ENCODE measurements at regions of chr13 and their contacts with region 1.

Region 1: GRCh38 chr13:27977476-27978300 is 8.6 kb upstream of the CDX2 start:
- DNase-seq: peak in 1 of 2 experiments; percentile 43
- H3K4me3 ChIP-seq: peak overlapping the region; percentile 85
- H3K4me3 Mint-ChIP-seq: peak overlapping the region; percentile 82
- H3K27ac Mint-ChIP-seq: peak overlapping the region; percentile 10
- H3K4me1 ChIP-seq: peaks cover 43% of the 10 kb centered on the region
- H3K4me1 Mint-ChIP-seq: peaks cover 32% of the 10 kb centered on the region
- H3K27me3 ChIP-seq: no peaks in the 10 kb centered on the region
- H3K27me3 Mint-ChIP-seq: no peaks in the 10 kb centered on the region
- CTCF ChIP-seq: peak; percentile 25 to 34

Region 2: GRCh38 chr13:27839809-27840467 is 137.8 kb before region 1 on chr13:
- CTCF ChIA-PET with region 1: no interaction called
- POLR2A ChIA-PET with region 1: no interaction called
- intact Hi-C with region 1: no loop called
- DNase-seq: no peak
- H3K4me3 ChIP-seq: no peak overlapping the region
- H3K4me3 Mint-ChIP-seq: no peak overlapping the region
- H3K27ac Mint-ChIP-seq: no peak overlapping the region
- H3K4me1 ChIP-seq: 0 out of 2 replicates have a peak, but pooled peaks cover 6% of the 10 kb centered on the region
- H3K4me1 Mint-ChIP-seq: peaks cover 12% of the 10 kb centered on the region
- H3K27me3 ChIP-seq: no peaks in the 10 kb centered on the region
- H3K27me3 Mint-ChIP-seq: no peaks in the 10 kb centered on the region
- CTCF ChIP-seq: peak in 1 of 2 experiments; percentile 4

Region 3: DNA sequence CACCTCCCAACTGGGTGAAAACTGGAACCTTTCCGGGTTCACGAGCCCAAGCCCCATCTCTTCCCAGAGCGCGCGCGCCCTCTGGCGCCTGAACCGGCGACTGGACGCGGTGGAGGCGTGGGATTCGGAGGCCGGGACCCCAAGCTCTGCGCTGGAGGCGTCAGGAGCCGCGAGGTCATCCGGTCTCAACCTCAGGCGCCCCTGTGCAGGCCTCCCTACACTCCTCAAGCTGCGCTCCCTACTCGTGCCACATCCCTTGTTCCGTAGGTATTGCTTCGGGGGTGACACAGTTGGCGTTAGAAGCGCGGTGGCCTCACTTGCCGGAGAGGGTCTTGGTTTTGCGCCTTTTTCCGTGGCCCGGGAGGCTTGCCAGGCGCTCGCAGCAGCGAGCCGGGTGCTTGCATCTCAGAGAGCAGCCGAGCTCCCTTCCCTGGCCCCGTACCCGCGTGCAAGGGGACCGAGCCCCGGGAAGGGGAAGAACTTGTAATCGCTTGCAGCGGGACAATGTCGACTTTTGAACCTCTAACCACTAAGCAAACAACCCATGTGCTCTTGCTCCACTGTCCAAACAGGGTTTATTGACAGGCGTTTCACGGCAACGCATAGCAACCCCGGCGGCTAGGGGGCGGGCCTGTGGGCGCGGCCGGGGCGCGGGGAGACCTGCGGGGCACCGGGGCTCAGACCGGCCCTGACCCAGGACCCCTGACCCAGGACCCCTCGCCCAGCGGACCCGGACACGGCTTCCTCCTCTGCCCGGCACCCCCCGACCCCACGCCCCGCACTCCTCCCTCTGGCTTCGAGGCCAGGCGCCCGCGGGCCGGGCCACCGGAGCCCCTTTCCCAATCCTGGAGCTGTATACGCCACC is 17.1 kb before region 1 on chr13:
- CTCF ChIA-PET with region 1: interaction called, 7 read pairs
- POLR2A ChIA-PET with region 1: interaction called, 6 read pairs
- intact Hi-C with region 1: loop called (anchors 2 kb)
- DNase-seq: peak; percentile 96
- H3K4me3 ChIP-seq: peak overlapping the region; percentile 35
- H3K4me3 Mint-ChIP-seq: peak overlapping the region; percentile 52
- H3K27ac Mint-ChIP-seq: peak overlapping the region; percentile 66
- H3K4me1 ChIP-seq: peaks cover 88% of the 10 kb centered on the region
- H3K4me1 Mint-ChIP-seq: peaks cover 32% of the 10 kb centered on the region
- H3K27me3 ChIP-seq: no peaks in the 10 kb centered on the region
- H3K27me3 Mint-ChIP-seq: no peaks in the 10 kb centered on the region
- CTCF ChIP-seq: peak; percentile 73 to 78